Heart left ventricle (tissue), 16 donors: ENCODE measurements at regions of chr22 and their contacts with region 1.

Region 1: DNA sequence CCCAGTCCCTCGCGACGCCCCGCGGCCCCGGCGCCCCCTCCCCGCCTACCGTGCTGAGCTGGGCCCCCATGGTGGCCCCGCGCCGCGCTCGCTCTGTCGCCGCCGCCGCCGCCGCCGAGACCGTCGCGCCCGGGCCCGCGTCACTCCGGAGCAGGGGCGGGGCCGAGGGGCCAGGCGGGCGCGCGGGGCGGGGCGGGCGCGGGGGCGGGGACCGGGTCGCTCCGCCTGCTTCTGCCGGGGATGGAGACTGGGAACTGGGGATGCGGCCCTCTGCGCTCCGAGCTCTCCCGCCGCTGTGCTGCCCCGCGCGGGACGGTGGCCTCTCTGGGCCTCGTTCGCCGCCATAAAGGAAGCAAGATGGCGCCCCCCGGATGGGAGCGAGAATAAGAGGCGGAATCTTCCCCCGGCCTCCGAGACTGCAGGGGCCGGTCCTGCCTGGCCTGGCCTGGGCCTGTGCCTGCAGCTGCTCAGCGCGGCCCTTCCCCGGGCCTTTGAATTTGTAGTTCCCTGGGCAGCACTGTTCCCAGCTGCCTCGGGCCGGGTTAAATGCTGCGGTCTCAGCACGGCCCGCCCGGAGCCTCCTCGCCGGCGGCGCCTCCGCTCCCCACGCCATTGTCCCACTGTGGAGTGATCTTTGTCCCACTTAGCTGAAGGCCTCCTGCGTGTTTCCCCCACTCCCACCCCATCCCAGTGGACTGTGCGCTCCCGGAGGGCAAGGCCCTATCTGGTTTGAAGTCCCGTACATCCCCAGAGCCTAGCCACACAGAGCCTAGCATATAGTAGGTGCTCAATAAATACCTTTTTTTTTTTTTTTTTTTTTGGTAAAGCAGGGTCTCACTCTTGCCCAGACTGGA is at the start of gene CYB5R3:
- DNase-seq: peak; percentile 88 to 93 (median 91)
- ATAC-seq: peak; percentile 12 to 76 (median 70)
- H3K4me3 ChIP-seq: peak within 1 kb of the TSS; percentile 69 to 99 (median 94)
- H3K27ac ChIP-seq: peak within 1 kb of the TSS; percentile 90 to 97 (median 96)
- H3K4me1 ChIP-seq: peaks cover 19 to 48% (median 41%) of the 10 kb centered on the region in 12 donors
- H3K27me3 ChIP-seq: no peaks in the 10 kb centered on the region
- CTCF ChIP-seq: peak in 3 of 12 donors; percentile 6 to 39 (median 25)
- POLR2A ChIP-seq: peak in 1 of 2 donors; percentile 54
- total RNA-seq, gene CYB5R3: 223 to 459 (median 305) TPM

Region 2: GRCh38 chr22:42511401-42511891 is 138.0 kb before region 1 on chr22:
- intact Hi-C with region 1: no loop called
- DNase-seq: no peak
- ATAC-seq: peak in 1 of 4 donors; percentile 14
- H3K4me3 ChIP-seq: no peak overlapping the region
- H3K27ac ChIP-seq: peak overlapping the region in 1 of 12 donors; percentile 83
- H3K4me1 ChIP-seq: peaks cover 0 to 21% (median 4%) of the 10 kb centered on the region in 12 donors
- H3K27me3 ChIP-seq: no peaks in the 10 kb centered on the region
- CTCF ChIP-seq: no peak
- POLR2A ChIP-seq: no peak

Region 3: GRCh38 chr22:42614312-42615091 is 35.0 kb before region 1 on chr22 and contains the start of gene POLDIP3:
- intact Hi-C with region 1: loop called in 3 of 10 experiments (anchors 2 kb)
- DNase-seq: peak; percentile 99 to 100 (median 99)
- ATAC-seq: peak; percentile 88 to 93 (median 89)
- H3K4me3 ChIP-seq: peak within 1 kb of the TSS; percentile 66 to 98 (median 88)
- H3K27ac ChIP-seq: peak within 1 kb of the TSS; percentile 90 to 99 (median 97)
- H3K4me1 ChIP-seq: peaks cover 9 to 68% (median 53%) of the 10 kb centered on the region in 12 donors
- H3K27me3 ChIP-seq: no peaks in the 10 kb centered on the region
- CTCF ChIP-seq: peak in 10 of 12 donors; percentile 3 to 61 (median 26)
- POLR2A ChIP-seq: peak in 1 of 2 donors; percentile 78
- total RNA-seq, gene POLDIP3: 23.5 to 38.4 (median 29.0) TPM

Region 4: DNA sequence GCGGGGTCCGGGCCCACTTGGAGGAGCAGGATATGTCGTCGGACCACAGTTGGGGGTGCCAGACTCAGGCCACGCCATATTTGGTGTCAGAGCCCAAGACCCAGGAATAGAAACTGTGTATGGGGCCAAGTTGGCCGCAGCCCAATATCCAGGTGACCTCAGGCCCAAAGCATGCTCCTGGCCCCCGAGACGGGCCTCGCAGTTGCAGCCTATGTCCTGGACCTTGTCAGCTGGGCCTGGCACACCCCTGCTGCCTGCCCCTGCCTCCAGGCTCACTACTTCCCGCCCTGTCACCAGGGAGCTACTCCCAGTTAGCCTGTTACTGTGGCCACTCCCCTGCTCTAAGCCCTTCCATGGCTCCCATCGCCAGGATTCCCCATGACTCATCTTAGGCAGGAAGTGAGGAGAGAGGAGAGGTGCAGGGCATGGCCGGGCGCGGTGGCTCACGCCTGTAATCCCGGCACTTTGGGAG is 48.1 kb after region 1 on chr22:
- intact Hi-C with region 1: loop called in 2 of 10 experiments (anchors 5 kb)
- DNase-seq: peak; percentile 90 to 97 (median 93)
- ATAC-seq: peak; percentile 87 to 90 (median 88)
- H3K4me3 ChIP-seq: no peak overlapping the region
- H3K27ac ChIP-seq: peak overlapping the region; percentile 88 to 99 (median 94)
- H3K4me1 ChIP-seq: peaks cover 16 to 92% (median 67%) of the 10 kb centered on the region in 12 donors
- H3K27me3 ChIP-seq: no peaks in the 10 kb centered on the region
- CTCF ChIP-seq: no peak
- POLR2A ChIP-seq: no peak

Region 5: GRCh38 chr22:42814215-42814614 is 164.7 kb after region 1 on chr22:
- intact Hi-C with region 1: loop called in 1 of 10 experiments (anchors 10 kb)
- DNase-seq: no peak
- ATAC-seq: no peak
- H3K4me3 ChIP-seq: no peak overlapping the region
- H3K27ac ChIP-seq: no peak overlapping the region
- H3K4me1 ChIP-seq: peaks cover 0 to 12% (median 4%) of the 10 kb centered on the region in 12 donors
- H3K27me3 ChIP-seq: no peaks in the 10 kb centered on the region
- CTCF ChIP-seq: no peak
- POLR2A ChIP-seq: no peak

Region 6: DNA sequence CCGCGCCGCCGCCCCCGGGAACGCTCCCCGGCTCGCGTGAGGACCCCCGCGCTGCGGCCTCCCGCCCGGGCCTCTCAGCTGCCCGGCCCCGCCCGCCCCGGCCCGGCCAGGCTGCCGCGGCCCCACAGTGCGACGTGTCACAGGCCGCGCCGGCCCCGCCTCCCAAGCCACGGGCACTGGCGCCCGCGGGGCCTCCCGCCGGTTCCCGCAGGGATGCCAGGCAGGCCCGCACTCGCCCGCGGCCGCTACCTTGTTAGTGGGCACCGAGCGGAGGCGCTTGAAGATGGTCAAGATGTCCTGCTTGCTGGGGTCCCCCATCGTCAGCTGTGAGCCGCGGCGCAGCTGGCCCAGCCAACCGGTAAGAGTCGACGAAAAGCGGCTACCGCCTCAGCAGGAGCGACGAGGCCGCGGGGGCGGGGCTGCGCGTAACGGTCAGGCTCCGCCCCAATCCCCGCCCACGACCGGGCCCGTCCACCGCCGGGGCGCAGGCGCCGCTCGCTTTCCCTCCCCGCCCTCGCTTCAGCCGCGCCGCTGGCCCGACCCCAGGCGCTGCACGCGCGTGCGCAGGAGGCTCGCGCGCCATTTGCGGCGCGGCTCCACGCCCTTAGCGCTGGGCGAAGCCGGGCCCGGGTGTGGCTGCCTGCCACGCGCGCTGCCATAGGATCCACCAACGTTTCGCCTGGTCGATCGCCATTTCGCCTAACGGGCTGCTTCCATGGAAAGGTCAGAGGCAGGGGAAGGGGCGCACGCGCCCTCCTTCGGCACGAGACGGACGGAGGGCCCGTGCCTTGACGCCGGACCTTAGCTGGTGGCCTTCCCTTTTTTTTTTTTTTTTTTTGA is 207.6 kb after region 1 on chr22 and contains the start of gene ARFGAP3:
- intact Hi-C with region 1: loop called in 1 of 10 experiments (anchors 5 kb)
- DNase-seq: peak; percentile 94 to 98 (median 96)
- ATAC-seq: peak; percentile 90 to 98 (median 96)
- H3K4me3 ChIP-seq: peak within 1 kb of the TSS; percentile 72 to 95 (median 90)
- H3K27ac ChIP-seq: peak within 1 kb of the TSS; percentile 87 to 98 (median 98)
- H3K4me1 ChIP-seq: peaks cover 0 to 35% (median 18%) of the 10 kb centered on the region in 12 donors
- H3K27me3 ChIP-seq: no peaks in the 10 kb centered on the region
- CTCF ChIP-seq: no peak
- POLR2A ChIP-seq: peak; percentile 27 to 92
- total RNA-seq, gene ARFGAP3: 15.4 to 30.9 (median 25.1) TPM